K562 (cell line): ENCODE measurements at regions of chr17 and their contacts with region 1.

Region 1: DNA sequence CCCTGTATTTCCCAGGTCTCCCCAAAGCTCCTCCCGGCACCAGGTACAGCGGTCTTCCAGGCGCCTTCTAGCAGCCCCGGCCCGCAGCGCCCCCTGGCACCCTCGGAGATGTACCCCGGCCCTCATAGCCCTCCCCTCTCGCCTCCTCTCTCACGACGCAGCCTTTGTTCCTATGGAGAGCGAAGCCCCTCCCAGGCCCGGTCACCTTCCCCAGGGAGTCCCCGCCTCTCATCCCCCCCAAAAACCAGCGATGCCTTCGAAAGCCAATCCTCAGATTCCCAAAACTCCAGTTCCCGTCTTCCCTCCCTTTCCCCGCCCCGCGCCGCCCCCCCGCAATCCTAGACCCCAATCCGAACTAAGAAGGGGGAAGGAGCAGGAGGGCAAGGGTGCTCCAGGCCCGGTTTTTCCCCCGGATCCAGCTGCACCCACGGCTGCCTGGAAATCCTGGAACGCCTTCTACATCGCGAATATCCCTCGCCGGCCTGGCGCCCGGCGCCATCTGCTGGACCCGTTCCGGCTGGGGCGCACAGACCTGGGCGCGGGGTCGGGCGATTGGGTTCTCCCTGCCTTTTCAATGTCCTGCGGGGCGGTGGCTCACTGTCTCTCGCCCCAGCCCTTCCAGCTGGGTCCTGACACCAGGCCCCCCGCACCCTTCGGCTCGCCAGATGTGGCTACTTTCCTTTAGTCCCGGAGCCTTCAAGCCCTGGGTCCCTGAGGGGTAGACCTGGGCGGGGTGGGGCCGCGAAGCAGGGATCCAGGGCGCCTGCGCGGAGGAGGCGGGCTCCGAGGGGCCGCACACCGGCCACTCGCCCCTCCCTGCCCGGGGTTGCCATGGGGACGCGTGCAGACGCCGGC is at the start of gene DNAH2:
- DNase-seq: peak; percentile 73 to 93 (median 87)
- ATAC-seq: peak; percentile 93
- H3K4me3 ChIP-seq: peak within 1 kb of the TSS; percentile 45
- H3K27ac ChIP-seq: no peak within 1 kb of the TSS
- H3K4me1 ChIP-seq: peaks cover 6 to 21% of the 10 kb centered on the region in 2 experiments; a peak in 3 of 5 replicates
- H3K27me3 ChIP-seq: peaks cover 15 to 65% of the 10 kb centered on the region in 2 experiments; a peak in 4 of 5 replicates
- CTCF ChIP-seq: peak; percentile 46 to 75 (median 68); a peak in 5 of 6 replicates
- EP300 ChIP-seq: no peak
- POLR2A ChIP-seq: no peak
- RAD21 ChIP-seq: peak; percentile 53 to 73
- polyA plus RNA-seq, gene DNAH2: 0.03 TPM in 1 of 2 experiments, not detected in the other

Region 2: DNA sequence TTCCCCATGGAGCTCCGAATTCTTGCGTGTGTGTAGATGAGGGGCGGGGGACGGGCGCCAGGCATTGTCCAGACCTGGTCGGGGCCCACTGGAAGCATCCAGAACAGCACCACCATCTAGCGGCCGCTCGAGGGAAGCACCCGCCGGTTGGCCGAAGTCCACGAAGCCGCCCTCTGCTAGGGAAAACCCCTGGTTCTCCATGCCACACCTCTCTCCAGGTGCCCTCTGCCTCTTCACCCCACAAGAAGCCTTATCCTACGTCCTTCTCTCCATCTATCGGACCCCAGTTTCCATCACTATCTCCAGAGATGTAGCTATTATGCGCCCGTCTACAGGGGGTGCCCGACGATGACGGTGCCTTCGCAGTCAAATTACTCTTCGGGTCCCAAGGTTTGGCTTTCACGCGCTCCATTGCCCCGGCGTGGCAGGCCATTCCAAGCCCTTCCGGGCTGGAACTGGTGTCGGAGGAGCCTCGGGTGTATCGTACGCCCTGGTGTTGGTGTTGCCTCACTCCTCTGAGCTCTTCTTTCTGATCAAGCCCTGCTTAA is 156.0 kb before region 1 on chr17:
- CTCF ChIA-PET with region 1: no interaction called
- POLR2A ChIA-PET with region 1: no interaction called
- in situ Hi-C with region 1: no loop called
- intact Hi-C with region 1: no loop called
- DNase-seq: peak; percentile 77 to 87 (median 82)
- ATAC-seq: peak; percentile 89
- H3K4me3 ChIP-seq: peak overlapping the region; percentile 76
- H3K27ac ChIP-seq: peak overlapping the region; percentile 81
- H3K4me1 ChIP-seq: peaks cover 10 to 52% of the 10 kb centered on the region in 2 experiments; a peak in 4 of 5 replicates
- H3K27me3 ChIP-seq: no peaks in the 10 kb centered on the region
- CTCF ChIP-seq: peak; percentile 76 to 86 (median 79)
- EP300 ChIP-seq: no peak
- POLR2A ChIP-seq: no peak
- RAD21 ChIP-seq: peak; percentile 77 to 79

Region 3: GRCh38 chr17:7632492-7632894 is 84.6 kb before region 1 on chr17:
- CTCF ChIA-PET with region 1: interaction called, 5 read pairs
- POLR2A ChIA-PET with region 1: no interaction called
- in situ Hi-C with region 1: no loop called
- intact Hi-C with region 1: loop called (anchors 1 kb)
- DNase-seq: peak; percentile 48 to 68 (median 55)
- ATAC-seq: peak; percentile 84
- H3K4me3 ChIP-seq: no peak overlapping the region
- H3K27ac ChIP-seq: no peak overlapping the region
- H3K4me1 ChIP-seq: peaks cover 0 to 13% of the 10 kb centered on the region in 2 experiments; a peak in 3 of 5 replicates
- H3K27me3 ChIP-seq: no peaks in the 10 kb centered on the region
- CTCF ChIP-seq: peak; percentile 65 to 76 (median 71)
- EP300 ChIP-seq: no peak
- POLR2A ChIP-seq: no peak
- RAD21 ChIP-seq: peak; percentile 35 to 62; a peak in 3 of 4 replicates

Region 4: DNA sequence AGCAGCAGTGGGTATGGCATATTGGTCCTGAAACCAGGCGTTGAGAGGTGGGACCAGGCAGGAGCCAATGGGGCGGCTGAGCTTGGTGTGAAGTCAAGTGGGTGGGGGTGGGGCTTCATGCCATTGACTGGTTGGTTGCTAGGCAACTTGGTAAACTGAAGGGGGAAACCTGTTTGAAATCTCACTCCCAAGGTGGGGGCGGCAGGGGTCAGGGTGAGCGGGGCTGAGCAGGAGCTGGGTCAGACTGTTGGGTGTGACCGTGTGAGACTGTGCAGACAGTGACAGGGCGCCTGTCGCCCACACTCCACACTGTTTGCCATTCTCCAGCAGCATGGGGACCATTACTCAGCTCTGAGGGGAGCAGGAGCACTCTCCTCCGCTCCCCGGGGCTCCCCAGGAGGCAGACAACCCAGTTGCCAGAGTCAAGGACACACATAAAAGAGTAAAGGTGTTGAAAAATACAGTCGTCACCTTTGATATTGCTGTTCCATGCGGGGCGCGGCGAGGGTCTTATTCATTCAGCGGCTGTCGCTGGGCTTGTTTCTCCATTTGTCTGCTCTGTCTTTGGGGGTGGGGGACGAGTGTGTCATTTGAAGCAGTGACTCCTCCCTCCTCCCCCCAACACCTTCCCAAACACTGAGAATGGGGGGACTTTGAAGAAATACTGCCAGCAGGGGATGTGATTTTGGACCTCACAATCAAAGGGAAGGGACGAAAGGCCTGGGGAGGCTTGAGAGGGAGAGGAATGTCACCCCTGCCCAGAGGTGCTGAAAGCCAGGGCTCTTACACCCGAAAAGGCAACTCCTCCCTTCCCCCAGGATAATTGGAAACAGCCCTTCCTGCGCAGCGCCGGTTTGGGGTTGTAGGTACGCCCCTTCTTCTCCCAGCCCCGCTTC is 13.3 kb before region 1 on chr17:
- CTCF ChIA-PET with region 1: no interaction called
- POLR2A ChIA-PET with region 1: interaction called, 13 read pairs
- in situ Hi-C with region 1: no loop called
- intact Hi-C with region 1: no loop called
- DNase-seq: peak; percentile 34 to 58 (median 42)
- ATAC-seq: peak; percentile 63
- H3K4me3 ChIP-seq: no peak overlapping the region
- H3K27ac ChIP-seq: no peak overlapping the region
- H3K4me1 ChIP-seq: peaks cover 5 to 23% of the 10 kb centered on the region in 2 experiments; a peak in 3 of 5 replicates
- H3K27me3 ChIP-seq: peaks cover 7 to 27% of the 10 kb centered on the region in 2 experiments; a peak in 4 of 5 replicates
- CTCF ChIP-seq: no peak
- EP300 ChIP-seq: no peak
- POLR2A ChIP-seq: no peak
- RAD21 ChIP-seq: no peak